Ovary (tissue), 10 donors: ENCODE measurements at regions of chr3 and their contacts with region 1.

Region 1: DNA sequence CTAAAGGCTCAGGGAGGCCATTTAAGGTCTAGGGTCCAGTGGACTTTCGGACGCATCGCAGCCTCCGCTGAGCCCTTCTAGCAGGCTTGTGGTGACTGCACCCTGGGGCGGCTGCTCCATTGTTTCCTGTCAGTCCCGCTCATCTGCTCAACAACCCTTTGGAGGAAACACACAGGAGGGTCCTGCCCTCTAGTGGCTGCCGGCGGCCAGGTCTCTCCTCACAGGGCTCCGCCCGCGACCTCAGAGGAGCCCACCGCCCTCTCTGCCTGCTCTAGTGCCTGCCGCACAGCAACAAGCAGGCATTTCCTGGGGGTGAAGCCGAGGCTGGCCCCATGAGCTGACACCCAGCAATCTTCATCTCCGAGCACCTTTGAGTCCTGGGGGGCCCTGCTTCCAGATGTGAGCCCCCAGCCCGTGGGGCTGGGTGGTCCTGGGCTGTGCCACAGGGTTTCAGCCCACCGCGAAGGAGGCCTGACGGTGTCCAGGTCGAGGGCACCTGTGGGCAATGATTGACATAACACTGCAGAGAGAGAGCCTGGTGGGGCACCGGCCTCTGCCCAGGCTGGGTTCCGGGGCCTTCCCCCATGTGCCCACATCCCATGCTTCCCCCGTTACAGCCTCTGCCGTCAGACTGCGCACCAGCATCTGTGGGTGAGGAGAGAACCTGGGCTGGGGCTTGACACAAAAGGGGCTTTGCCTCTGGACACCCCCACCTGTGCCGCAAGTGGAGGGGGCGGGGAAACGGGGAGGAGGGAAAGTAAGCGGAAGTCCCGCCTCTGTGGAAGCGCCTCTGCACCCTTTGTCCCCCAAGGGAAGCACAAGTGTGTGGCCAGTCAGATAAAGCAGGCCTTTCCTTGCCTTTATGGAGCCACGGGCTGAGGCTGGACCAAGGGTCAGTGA is 27.0 kb upstream of the SFMBT1 start:
- DNase-seq: peak; percentile 74 to 85 (median 81)
- H3K4me3 ChIP-seq: peak overlapping the region; percentile 58
- H3K27ac ChIP-seq: peak overlapping the region; percentile 9 to 33
- H3K4me1 ChIP-seq: peaks cover 5% of the 10 kb centered on the region
- H3K27me3 ChIP-seq: no peaks in the 10 kb centered on the region
- CTCF ChIP-seq: peak; percentile 75 to 92 (median 85)
- EP300 ChIP-seq: no peak
- POLR2A ChIP-seq: no peak

Region 2: DNA sequence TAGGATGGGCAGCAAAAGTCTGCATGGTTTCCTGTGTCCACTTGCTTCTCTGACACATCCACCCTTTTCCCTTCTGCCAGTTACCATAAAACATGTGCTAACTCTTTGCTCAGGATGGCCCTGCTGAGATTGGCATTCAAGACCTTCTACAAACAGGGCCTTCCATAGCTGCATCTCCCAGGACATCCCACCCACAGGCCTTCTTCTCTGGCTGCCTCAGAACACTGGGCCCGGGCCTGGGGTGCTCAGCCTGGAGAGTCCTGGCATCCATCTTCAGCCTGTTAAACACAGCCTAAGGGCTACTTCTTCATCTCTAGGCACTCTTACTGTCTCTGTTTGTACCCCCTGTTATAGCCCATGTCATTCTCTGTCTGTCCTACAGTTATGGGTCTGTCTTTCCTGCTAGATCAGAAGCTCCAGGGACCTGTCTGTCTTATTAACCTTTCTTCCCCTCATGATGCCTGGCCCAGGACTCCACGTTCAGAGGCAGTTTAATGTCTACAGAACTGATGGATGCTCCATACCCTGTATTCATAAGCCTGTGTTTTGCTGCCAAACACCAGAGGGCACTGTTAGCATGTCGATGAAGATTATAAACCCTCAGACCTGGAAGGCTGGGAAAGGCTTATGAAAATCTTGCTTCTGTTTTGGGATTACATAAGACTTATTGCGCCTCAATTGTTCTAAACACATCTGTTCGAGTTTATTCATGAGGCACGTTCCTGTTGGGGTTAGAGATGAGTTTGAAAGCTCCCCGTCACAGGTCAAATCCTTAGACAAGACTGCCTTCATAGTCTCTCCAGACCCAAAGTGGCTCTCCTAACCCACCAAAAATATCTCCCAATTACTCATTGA is 644.5 kb before region 1 on chr3:
- intact Hi-C with region 1: loop called in 1 of 4 experiments (anchors 10 kb)
- DNase-seq: peak; percentile 60 to 81 (median 65)
- H3K4me3 ChIP-seq: no peak overlapping the region
- H3K27ac ChIP-seq: no peak overlapping the region
- H3K4me1 ChIP-seq: peaks cover under 1% of the 10 kb centered on the region
- H3K27me3 ChIP-seq: no peaks in the 10 kb centered on the region
- CTCF ChIP-seq: peak; percentile 60 to 76 (median 74)
- EP300 ChIP-seq: no peak
- POLR2A ChIP-seq: no peak

Region 3: DNA sequence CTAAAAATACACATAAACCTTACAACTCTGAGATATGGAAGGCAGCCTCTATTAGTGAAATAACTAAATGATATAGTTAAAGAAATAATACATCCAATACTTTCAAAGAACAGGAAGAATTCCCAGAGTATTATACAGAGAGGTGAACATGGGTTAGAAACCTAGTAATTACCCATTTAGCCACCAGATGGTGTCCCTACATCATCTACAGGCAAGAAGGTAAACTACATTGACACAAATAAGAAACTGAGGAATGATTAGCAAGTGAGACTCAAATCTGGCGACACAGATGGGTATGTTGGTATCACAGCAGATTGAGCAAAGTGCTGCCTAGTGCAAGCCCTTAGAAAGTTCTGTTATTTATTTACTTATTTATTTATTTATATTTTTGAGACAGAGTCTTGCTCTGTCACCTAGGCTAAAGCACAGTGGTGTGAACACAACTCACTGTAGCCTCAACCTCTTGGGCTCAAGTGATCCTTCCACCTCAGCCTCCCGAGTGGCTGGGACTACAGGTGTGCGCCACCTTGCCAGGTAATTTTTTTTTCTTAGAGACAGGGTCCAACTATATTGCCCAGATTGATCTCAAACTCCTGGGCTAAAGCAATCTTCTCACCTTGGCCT is 330.4 kb before region 1 on chr3:
- intact Hi-C with region 1: loop called in 1 of 4 experiments (anchors 5 kb)
- DNase-seq: no peak
- H3K4me3 ChIP-seq: no peak overlapping the region
- H3K27ac ChIP-seq: no peak overlapping the region
- H3K4me1 ChIP-seq: no peaks in the 10 kb centered on the region
- H3K27me3 ChIP-seq: no peaks in the 10 kb centered on the region
- CTCF ChIP-seq: peak in 1 of 3 donors; percentile 39
- EP300 ChIP-seq: no peak
- POLR2A ChIP-seq: no peak